ENCODE measurements at regions of chr7 and their contacts with region 1.

Region 1: DNA sequence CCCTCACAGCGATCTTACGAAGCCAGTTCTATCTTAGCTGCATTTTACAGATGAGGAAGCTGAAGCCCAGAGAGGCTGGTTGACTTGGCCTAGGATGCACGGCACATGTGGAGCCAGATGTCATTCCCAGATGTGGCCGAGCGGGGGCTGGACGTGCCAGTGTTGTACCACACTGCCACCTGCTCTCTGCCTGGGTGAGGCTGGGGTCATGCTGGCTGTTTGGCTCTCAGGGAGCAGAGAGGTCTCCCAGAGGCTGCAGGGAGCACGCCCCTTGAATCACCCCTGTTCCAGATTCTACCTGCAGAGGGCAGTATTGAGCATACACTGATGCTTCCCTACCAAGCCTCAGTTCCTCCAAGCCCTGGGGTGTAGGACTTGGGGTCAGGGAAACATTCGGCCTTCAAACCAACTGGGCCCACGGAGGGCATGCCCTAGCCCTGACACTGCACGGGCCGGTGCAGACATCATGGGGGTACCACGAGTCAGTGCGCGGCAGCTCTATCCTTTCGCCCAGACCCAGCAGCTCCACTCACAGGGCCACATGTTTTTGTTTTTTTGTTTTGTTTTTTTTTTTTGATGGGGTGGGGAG is 3.8 kb upstream of the GTF2IRD1 start:
- DNase-seq: peak; percentile 83
- ATAC-seq: peak; percentile 27
- H3K4me3 Mint-ChIP-seq: no peak overlapping the region
- H3K27ac Mint-ChIP-seq: no peak overlapping the region
- H3K4me1 Mint-ChIP-seq: peaks cover 14% of the 10 kb centered on the region
- H3K27me3 Mint-ChIP-seq: no peaks in the 10 kb centered on the region

Region 2: GRCh38 chr7:74544706-74545469 is 95.0 kb after region 1 on chr7:
- CTCF ChIA-PET with region 1: interaction called, 3 read pairs
- POLR2A ChIA-PET with region 1: no interaction called
- intact Hi-C with region 1: loop called (anchors 1 to 5 kb)
- DNase-seq: peak; percentile 70
- ATAC-seq: peak; percentile 77
- H3K4me3 Mint-ChIP-seq: no peak overlapping the region
- H3K27ac Mint-ChIP-seq: no peak overlapping the region
- H3K4me1 Mint-ChIP-seq: no peaks in the 10 kb centered on the region
- H3K27me3 Mint-ChIP-seq: no peaks in the 10 kb centered on the region

Region 3: DNA sequence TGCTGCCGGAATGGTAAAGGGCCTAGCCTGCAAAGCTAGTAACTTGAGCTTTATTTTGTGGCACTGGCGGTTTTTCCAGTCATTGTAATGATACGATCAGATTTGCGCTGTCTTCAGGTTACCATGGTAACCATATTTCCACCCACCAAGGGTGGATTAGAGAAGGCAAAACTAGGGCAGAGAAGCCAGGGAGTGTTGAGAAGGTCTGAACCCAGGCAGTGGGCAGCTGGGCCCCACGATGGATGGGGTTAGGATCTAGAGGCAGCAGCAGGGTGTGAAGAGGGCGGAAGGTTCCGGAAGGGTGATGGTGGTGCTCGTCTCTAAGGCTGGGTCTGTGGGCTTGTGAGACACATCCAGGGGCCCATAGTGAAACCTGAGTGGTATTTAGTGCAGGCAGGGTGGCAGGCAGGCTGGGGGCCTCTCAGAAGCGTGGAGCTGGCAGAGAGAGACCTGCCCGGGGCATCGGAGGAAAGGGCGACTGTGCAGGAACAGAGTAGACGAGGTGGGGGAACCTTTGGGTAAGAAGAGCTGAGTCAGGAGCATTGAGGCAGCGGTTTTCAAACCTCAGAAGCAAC is 119.7 kb after region 1 on chr7:
- CTCF ChIA-PET with region 1: interaction called, 5 read pairs
- POLR2A ChIA-PET with region 1: no interaction called
- intact Hi-C with region 1: loop called (anchors 1 to 2 kb)
- DNase-seq: peak; percentile 55
- ATAC-seq: peak; percentile 71
- H3K4me3 Mint-ChIP-seq: no peak overlapping the region
- H3K27ac Mint-ChIP-seq: peak overlapping the region; percentile 63
- H3K4me1 Mint-ChIP-seq: peaks cover 15% of the 10 kb centered on the region
- H3K27me3 Mint-ChIP-seq: no peaks in the 10 kb centered on the region

Region 4: GRCh38 chr7:74656837-74657691 is 207.2 kb after region 1 on chr7:
- CTCF ChIA-PET with region 1: interaction called, 4 read pairs
- POLR2A ChIA-PET with region 1: no interaction called
- intact Hi-C with region 1: loop called (anchors 1 to 2 kb)
- DNase-seq: peak; percentile 100
- ATAC-seq: peak; percentile 82
- H3K4me3 Mint-ChIP-seq: peak overlapping the region; percentile 76
- H3K27ac Mint-ChIP-seq: peak overlapping the region; percentile 92
- H3K4me1 Mint-ChIP-seq: peaks cover 52% of the 10 kb centered on the region
- H3K27me3 Mint-ChIP-seq: no peaks in the 10 kb centered on the region